Activated T-helper 2 cell treated with anti-CD3 and anti-CD28 coated beads, Interferon-gamma antibody, Interleukin-2, Interleukin-4, amounts not matched to agents 10 μg/mL and 5 μg/mL and 100 μg/mL, durations not matched to agents 14 hours and 24 hours and 36 hours (primary cell): ENCODE measurements at regions of chr1 and their contacts with region 1.

Region 1: DNA sequence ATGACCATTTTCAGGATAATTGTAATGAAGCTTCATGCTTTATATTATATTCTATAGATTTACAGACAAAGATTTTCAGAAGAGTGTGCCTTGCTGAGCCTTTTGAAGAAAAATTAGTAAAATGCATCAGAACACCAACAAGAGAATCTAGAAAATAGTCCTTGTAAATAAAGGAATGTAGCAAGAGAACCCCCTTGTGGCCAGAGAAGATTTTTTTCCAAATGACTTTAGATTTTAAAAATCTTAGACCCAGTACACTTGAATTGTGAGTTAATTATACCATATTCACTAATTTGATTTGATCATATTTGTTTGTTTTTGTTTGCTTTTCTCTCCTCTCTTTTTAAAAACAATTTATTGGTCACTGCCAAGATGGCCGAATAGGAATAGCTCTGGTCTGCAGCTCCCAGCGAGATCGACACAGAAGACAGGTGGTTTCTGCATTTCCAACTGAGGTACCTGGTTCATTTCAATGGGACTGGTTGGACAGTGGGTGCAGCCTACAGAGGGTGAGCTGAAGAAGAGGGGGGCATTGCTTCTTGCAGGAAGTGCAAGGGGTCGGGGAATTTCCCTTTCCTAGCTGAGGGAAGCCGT is 12.8 kb upstream of the IFI44L start:
- DNase-seq: no peak
- H3K4me3 Mint-ChIP-seq: no peak overlapping the region
- H3K27ac Mint-ChIP-seq: no peak overlapping the region
- H3K4me1 Mint-ChIP-seq: no peaks in the 10 kb centered on the region
- H3K27me3 Mint-ChIP-seq: peaks cover 32% of the 10 kb centered on the region

Region 2: DNA sequence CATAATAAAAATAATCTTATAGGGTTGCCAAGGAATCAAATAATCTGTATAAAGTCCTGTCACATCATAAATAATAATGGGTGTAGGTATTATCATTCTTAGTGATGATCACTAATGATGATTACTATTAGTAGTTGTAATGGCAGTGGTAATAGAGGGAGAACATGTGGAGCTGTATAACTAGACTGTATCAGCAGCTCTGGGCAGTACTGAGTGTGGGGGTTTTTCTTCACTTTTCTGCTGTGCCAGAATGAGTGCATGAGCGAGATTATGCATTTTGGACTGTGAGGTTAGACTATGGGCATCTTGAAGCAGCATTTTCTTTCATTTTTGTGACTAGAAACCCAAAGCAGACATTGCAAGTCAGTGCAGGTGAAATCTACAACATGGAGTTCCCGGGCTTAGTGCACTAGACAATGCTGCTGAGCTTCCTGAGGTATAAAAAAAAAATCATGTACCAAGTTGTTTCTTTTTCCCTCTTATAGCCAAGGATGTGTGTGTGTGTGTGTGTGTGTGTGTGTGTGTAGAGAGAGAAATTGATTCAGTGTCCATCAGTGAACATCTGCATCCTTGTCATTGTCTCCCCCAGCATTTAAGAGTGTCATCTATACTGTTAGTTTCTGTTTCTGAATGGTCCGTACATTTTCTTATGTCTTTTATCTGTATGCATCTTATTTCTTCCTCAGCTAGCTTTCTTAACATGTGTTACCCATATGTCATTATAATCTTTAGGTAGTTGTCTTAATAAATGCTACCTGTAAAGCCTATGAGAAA is 475.1 kb before region 1 on chr1:
- intact Hi-C with region 1: loop called (anchors 5 kb)
- DNase-seq: no peak
- H3K4me3 Mint-ChIP-seq: no peak overlapping the region
- H3K27ac Mint-ChIP-seq: no peak overlapping the region
- H3K4me1 Mint-ChIP-seq: no peaks in the 10 kb centered on the region
- H3K27me3 Mint-ChIP-seq: peaks cover 7% of the 10 kb centered on the region

Region 3: GRCh38 chr1:78145105-78145580 is 462.3 kb before region 1 on chr1:
- intact Hi-C with region 1: loop called (anchors 1 kb)
- DNase-seq: no peak
- H3K4me3 Mint-ChIP-seq: no peak overlapping the region
- H3K27ac Mint-ChIP-seq: no peak overlapping the region
- H3K4me1 Mint-ChIP-seq: peaks cover 14% of the 10 kb centered on the region
- H3K27me3 Mint-ChIP-seq: peaks cover 7% of the 10 kb centered on the region